Testis (tissue), 5 donors: ENCODE measurements at regions of chr19 and their contacts with region 1.

Region 1: GRCh38 chr19:36772311-36773222 is at the start of gene ZNF850:
- DNase-seq: peak; percentile 98
- H3K4me3 ChIP-seq: peak within 1 kb of the TSS; percentile 78 to 84
- H3K27ac ChIP-seq: peak within 1 kb of the TSS; percentile 76 to 89
- H3K4me1 ChIP-seq: peaks cover 3% of the 10 kb centered on the region
- H3K27me3 ChIP-seq: no peaks in the 10 kb centered on the region
- CTCF ChIP-seq: peak in 1 of 3 experiments; percentile 10
- POLR2A ChIP-seq: no peak
- total RNA-seq, gene ZNF850: 10.6 to 17.8 TPM

Region 2: DNA sequence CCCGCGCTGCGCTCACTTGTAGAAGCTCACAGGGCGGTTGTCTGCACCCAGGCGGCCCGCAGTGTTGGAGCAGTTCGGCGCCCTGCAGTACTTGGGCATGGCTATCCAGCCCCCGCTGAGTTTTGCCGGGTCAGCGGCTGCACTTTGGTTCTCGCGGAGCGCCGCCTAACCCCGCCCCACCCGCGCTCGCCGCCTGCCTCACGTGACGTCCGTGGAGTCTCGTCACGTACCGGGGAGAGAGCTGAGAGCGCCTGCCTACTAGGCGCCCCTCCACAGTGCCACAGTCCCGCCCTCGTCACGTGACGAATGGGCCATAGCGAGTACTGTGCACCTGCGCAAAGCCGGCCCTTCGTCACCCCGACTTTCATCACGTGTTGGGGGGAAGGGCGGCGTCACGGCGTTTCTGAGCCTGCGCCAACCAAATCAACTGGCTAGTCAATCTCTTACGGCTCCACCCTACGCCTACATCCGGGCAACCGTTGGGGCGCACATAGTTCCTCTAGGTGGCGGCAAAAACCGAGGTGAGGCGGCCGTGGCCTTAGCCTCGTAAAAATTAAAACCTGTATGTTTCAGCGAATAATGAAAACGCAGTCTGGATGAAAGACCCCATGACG is 718.3 kb before region 1 on chr19 and contains the start of gene THAP8:
- intact Hi-C with region 1: loop called (anchors 10 kb)
- DNase-seq: peak; percentile 99
- H3K4me3 ChIP-seq: peak within 1 kb of the TSS; percentile 62 to 79
- H3K27ac ChIP-seq: peak within 1 kb of the TSS; percentile 94 to 98
- H3K4me1 ChIP-seq: peaks cover 16% of the 10 kb centered on the region
- H3K27me3 ChIP-seq: no peaks in the 10 kb centered on the region
- CTCF ChIP-seq: peak; percentile 27 to 55 (median 45)
- POLR2A ChIP-seq: no peak
- total RNA-seq, gene THAP8: 25.0 to 34.2 TPM